H1 (cell line): ENCODE measurements at regions of chr14 and their contacts with region 1.

Region 1: DNA sequence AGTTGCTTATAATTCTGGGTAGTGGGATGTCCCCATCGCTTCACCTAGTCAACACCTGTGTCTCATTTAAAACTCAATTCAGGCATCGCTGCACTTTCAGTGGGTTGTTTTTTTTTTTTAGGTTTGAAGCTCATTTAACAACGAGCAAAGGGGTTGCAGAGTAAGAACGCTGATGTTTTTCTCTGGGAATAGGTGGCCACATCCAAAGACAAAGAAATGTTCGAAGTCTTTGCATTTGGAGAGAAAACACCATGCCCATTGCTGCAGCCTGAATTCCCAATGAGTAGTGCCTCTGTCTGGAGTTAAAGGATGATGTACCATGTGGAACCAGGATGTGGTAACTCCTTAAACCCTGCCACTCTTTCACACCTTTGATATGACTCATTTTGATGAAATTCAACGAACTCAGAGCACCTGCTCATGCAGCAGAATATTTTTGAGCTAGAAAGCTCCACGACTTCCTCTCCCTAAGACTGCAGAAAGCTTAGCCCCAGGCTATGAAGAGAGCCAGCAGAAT is 35.1 kb upstream of the BATF start:
- DNase-seq: peak in 1 of 2 experiments; percentile 31
- H3K4me3 ChIP-seq: no peak overlapping the region
- H3K27ac ChIP-seq: no peak overlapping the region
- H3K4me1 ChIP-seq: no peaks in the 10 kb centered on the region
- H3K27me3 ChIP-seq: 0 out of 7 replicates have a peak, but pooled peaks cover 0 to 2% (median 0%) of the 10 kb centered on the region in 4 experiments
- CTCF ChIP-seq: no peak
- EP300 ChIP-seq: no peak
- POLR2A ChIP-seq: no peak
- RAD21 ChIP-seq: no peak

Region 2: GRCh38 chr14:75320196-75320595 is 167.0 kb before region 1 on chr14:
- CTCF ChIA-PET with region 1: interaction called, 10 read pairs
- POLR2A ChIA-PET with region 1: no interaction called
- DNase-seq: no peak
- H3K4me3 ChIP-seq: no peak overlapping the region
- H3K27ac ChIP-seq: no peak overlapping the region
- H3K4me1 ChIP-seq: peaks cover 0 to 6% (median 2%) of the 10 kb centered on the region in 4 experiments; a peak in 2 of 7 replicates
- H3K27me3 ChIP-seq: no peaks in the 10 kb centered on the region
- CTCF ChIP-seq: no peak
- EP300 ChIP-seq: no peak
- POLR2A ChIP-seq: no peak
- RAD21 ChIP-seq: no peak

Region 3: GRCh38 chr14:75372260-75372659 is 115.0 kb before region 1 on chr14:
- CTCF ChIA-PET with region 1: no interaction called
- POLR2A ChIA-PET with region 1: no interaction called
- DNase-seq: no peak
- H3K4me3 ChIP-seq: no peak overlapping the region
- H3K27ac ChIP-seq: no peak overlapping the region
- H3K4me1 ChIP-seq: no peaks in the 10 kb centered on the region
- H3K27me3 ChIP-seq: no peaks in the 10 kb centered on the region
- CTCF ChIP-seq: no peak
- EP300 ChIP-seq: no peak
- POLR2A ChIP-seq: no peak
- RAD21 ChIP-seq: no peak

Region 4: DNA sequence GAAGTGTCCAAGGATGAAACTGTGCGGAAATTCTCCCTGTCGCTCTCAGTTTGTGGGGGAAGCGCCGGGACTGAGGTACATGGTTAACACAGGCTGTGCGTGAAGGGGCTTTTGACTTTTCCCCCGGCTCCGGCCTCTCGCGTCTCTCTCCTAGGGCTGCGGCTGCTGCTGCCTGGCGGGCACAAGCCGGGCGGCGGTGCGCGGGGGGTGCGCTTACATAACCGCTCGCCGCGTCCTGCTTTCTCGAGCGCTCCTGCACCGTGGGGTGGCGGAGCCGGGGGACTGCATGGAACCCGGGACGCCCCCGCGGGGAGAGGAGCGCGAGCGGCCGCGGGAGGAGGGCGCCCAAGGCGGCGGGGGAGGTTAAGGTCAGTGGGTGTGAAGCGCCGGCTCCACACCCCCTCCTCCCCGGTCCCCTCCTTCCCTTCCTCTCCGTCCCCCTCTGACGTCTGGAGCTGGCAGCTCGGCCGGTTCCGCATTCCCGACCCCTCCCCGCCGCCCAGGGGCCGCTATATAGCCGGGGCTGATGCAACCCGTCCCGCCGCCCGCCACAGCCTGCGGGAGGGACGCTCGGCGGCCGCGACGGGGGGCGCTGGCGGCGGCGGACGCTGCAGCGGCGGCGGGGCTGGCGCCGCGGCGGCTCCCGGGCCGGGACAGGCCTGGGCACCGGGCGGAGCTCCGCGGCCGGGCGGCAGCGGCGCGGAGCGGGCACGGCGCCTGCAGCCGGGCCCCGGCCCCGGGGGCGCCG is 59.6 kb before region 1 on chr14 and contains the start of gene JDP2:
- CTCF ChIA-PET with region 1: interaction called, 10 read pairs
- POLR2A ChIA-PET with region 1: no interaction called
- DNase-seq: peak in 1 of 2 experiments; percentile 79
- H3K4me3 ChIP-seq: peak within 1 kb of the TSS; percentile 59 to 77 (median 70)
- H3K27ac ChIP-seq: no peak within 1 kb of the TSS
- H3K4me1 ChIP-seq: peaks cover 8 to 17% (median 15%) of the 10 kb centered on the region in 4 experiments
- H3K27me3 ChIP-seq: peaks cover 0 to 13% (median 13%) of the 10 kb centered on the region in 4 experiments; a peak in 5 of 7 replicates
- CTCF ChIP-seq: no peak
- EP300 ChIP-seq: no peak
- POLR2A ChIP-seq: no peak; a peak in 1 of 3 replicates
- RAD21 ChIP-seq: no peak
- total RNA-seq, gene JDP2: 23.6 and 27.2 TPM in 2 replicates

Region 5: DNA sequence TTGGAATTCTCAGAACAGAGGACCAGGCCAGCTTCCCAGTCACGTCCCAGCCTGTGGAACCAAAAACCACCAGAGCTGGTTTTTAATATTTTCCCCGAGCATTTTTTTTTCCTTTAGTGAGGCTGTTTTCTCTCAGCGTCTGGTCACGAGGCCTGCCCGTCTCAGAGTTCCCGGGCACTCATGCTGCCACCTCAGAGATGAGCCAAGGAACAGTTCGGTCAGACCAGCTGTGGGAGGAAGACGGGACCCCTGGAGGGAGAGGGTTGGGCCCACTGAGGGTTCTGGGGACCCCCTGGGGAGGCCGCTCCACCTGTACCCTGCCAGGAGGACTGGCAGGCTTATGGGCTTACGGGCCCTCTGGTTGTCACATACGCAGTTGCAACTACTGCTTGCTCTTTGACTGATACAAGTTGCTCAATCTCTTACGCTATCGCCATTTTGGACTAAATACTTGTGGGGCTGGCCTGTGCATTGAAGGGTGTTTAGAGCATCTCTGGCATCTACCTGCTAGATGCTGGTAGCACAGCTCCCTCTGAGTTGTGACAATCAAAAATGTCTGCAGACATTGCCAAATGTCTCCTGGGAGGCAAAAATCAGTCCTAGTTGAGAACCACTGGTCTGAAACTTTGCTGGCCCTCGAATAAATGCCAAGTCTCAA is 19.3 kb before region 1 on chr14:
- CTCF ChIA-PET with region 1: interaction called, 10 read pairs
- POLR2A ChIA-PET with region 1: no interaction called
- DNase-seq: no peak
- H3K4me3 ChIP-seq: no peak overlapping the region
- H3K27ac ChIP-seq: no peak overlapping the region
- H3K4me1 ChIP-seq: peaks cover 0 to 4% (median 2%) of the 10 kb centered on the region in 4 experiments; a peak in 2 of 7 replicates
- H3K27me3 ChIP-seq: 0 out of 7 replicates have a peak, but pooled peaks cover 0 to 2% (median 0%) of the 10 kb centered on the region in 4 experiments
- CTCF ChIP-seq: no peak
- EP300 ChIP-seq: no peak
- POLR2A ChIP-seq: no peak
- RAD21 ChIP-seq: 0 out of 4 replicates have a peak, but pooled peaks of 1 of the 2 experiments have one; percentile 11

Region 6: DNA sequence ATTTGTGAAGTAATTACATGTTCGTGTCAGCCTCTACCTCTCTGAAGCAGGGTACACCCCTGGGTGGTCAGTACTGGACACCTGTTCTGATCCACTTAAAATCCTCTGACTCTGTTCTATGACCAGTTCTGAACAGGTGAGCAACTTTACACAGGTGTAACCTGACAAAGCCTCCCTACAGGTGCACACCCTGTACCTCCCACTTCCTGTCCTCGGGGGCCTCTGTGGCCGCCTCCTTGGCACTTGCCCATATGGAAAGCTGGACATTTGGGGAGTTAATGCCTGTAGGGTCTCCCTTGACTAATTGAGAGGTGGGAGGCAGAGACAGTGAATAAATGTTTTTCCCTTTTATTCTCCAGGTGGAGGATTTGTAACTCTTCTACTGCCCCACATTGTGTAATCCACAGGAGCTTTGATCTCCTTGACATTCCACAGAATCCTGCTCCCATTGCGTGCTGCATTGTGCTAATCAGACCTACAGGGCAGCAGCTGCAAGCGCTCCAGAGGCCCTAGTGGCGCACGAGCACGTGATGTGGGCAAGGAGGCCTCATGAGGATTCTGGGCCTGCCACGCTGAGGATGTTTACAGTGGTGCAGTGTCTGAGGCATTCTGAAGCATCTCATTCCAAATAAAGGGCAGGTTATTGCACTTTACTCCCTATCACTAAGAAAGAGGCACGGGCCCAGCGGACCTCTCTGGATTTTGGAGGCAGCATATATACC is 10.8 kb before region 1 on chr14:
- CTCF ChIA-PET with region 1: interaction called, 29 read pairs
- POLR2A ChIA-PET with region 1: interaction called, 5 read pairs
- DNase-seq: no peak
- H3K4me3 ChIP-seq: no peak overlapping the region
- H3K27ac ChIP-seq: no peak overlapping the region
- H3K4me1 ChIP-seq: peaks cover 5 to 15% (median 7%) of the 10 kb centered on the region in 4 experiments
- H3K27me3 ChIP-seq: 0 out of 7 replicates have a peak, but pooled peaks cover 0 to 2% (median 0%) of the 10 kb centered on the region in 4 experiments
- CTCF ChIP-seq: peak in 2 of 3 experiments; percentile 0 to 6; a peak in 2 of 4 replicates
- EP300 ChIP-seq: no peak
- POLR2A ChIP-seq: no peak
- RAD21 ChIP-seq: peak; percentile 3 to 7; a peak in 1 of 4 replicates

Region 7: DNA sequence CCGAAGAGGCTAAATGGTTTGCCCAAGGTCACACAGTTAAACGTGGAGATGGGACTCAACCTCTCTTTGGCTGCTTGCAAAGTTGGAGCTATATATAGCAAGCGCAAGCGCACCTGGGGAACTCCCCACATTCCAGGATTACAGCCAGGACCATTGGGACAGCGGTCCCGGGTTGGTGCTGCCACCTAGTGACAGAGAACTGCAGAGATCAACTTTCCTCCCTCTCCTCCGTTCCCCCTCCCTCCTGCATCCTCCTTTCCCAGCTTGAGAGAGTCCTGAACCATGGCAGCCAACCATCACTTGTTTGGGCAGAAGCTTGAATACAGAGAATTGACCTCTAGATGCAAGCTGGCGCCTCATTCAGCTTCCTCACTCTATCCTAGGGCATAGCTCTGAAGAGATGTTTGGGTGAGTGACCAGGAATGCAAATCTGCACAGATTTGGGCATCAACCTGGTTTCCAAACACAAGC is 73.8 kb after region 1 on chr14:
- CTCF ChIA-PET with region 1: interaction called, 14 read pairs
- POLR2A ChIA-PET with region 1: no interaction called
- DNase-seq: peak; percentile 79 to 88
- H3K4me3 ChIP-seq: no peak overlapping the region
- H3K27ac ChIP-seq: no peak overlapping the region
- H3K4me1 ChIP-seq: peaks cover 0 to 4% (median 2%) of the 10 kb centered on the region in 4 experiments; a peak in 3 of 7 replicates
- H3K27me3 ChIP-seq: no peaks in the 10 kb centered on the region
- CTCF ChIP-seq: peak; percentile 87 to 97 (median 90)
- EP300 ChIP-seq: peak in 1 of 2 experiments; percentile 67; a peak in 1 of 3 replicates
- POLR2A ChIP-seq: no peak
- RAD21 ChIP-seq: peak; percentile 90 to 93